CD14-positive monocyte (primary cell): ENCODE measurements at regions of chr6 and their contacts with region 1.

Region 1: GRCh38 chr6:125956506-125957390 is at the start of gene HINT3:
- DNase-seq: peak; percentile 98 to 99 (median 98)
- H3K4me3 ChIP-seq: peak within 1 kb of the TSS; percentile 86 to 96 (median 88)
- H3K4me3 Mint-ChIP-seq: peak within 1 kb of the TSS in 1 of 2 donors; percentile 12
- H3K27ac ChIP-seq: peak within 1 kb of the TSS; percentile 90 to 95
- H3K27ac Mint-ChIP-seq: peak within 1 kb of the TSS in 3 of 7 donors; percentile 44 to 81 (median 66)
- H3K4me1 ChIP-seq: peaks cover 26 to 27% of the 10 kb centered on the region in 2 donors
- H3K4me1 Mint-ChIP-seq: peaks cover 10% of the 10 kb centered on the region
- H3K27me3 ChIP-seq: no peaks in the 10 kb centered on the region
- H3K27me3 Mint-ChIP-seq: peaks cover 0 to 2% (median 0%) of the 10 kb centered on the region in 3 donors
- CTCF ChIP-seq: peak; percentile 98
- polyA plus RNA-seq, gene HINT3: 5.3 to 18.0 (median 12.3) TPM

Region 2: DNA sequence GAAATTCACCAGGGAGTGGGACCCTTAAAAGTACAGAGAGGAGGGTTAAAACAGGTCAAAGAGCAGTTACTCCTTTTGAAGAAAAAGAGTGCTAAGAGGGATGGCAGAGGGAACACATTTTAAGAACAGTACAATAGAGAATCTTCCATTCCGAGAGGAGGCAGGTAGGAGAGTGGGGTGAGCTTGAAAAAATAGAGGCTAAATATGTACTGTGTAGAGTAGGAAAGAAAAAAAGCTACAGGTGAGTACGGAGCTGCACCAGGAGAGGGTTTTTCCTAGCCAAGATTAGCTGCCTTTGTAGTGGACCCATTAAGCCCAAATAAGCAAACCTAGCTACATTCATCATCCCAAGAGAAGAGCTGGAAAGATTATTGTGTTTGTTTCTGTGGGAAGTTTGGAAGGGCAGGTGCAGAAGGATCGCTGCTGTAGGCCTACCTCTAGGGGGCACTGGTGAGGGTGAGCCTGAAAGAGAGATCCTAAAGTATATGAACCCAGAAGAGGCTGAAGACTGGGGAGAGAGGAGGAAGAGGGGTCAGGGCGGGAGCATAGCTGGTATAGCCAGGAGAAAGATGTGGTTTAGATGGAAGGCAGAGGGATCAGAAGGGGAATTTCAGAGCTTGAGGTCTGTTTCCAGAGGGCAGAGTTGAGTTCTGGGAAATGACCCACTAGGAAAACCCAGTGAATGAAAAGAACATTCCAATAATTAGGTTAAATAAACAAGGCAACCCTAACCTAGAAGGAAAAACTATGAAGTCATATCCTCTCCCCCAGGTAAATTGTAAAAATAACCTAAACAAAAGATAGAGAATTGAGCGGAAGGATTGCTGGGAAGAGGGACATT is 50.4 kb before region 1 on chr6:
- intact Hi-C with region 1: loop called in 1 of 2 experiments (anchors 10 kb)
- DNase-seq: peak; percentile 45 to 63 (median 49)
- H3K4me3 ChIP-seq: no peak overlapping the region
- H3K4me3 Mint-ChIP-seq: no peak overlapping the region
- H3K27ac ChIP-seq: no peak overlapping the region
- H3K27ac Mint-ChIP-seq: peak overlapping the region in 6 of 7 donors; percentile 3 to 73 (median 35)
- H3K4me1 ChIP-seq: peaks cover 19 to 26% of the 10 kb centered on the region in 2 donors
- H3K4me1 Mint-ChIP-seq: peaks cover 34% of the 10 kb centered on the region
- H3K27me3 ChIP-seq: no peaks in the 10 kb centered on the region
- H3K27me3 Mint-ChIP-seq: no peaks in the 10 kb centered on the region
- CTCF ChIP-seq: peak; percentile 90

Region 3: GRCh38 chr6:125918681-125919566 is 37.8 kb before region 1 on chr6:
- intact Hi-C with region 1: loop called in 1 of 2 experiments (anchors 5 kb)
- DNase-seq: peak; percentile 75 to 90 (median 75)
- H3K4me3 ChIP-seq: peak overlapping the region; percentile 33 to 67 (median 67)
- H3K4me3 Mint-ChIP-seq: peak overlapping the region; percentile 79 to 89
- H3K27ac ChIP-seq: peak overlapping the region; percentile 43 to 81
- H3K27ac Mint-ChIP-seq: peak overlapping the region; percentile 90 to 97 (median 95)
- H3K4me1 ChIP-seq: peaks cover 28 to 38% of the 10 kb centered on the region in 2 donors
- H3K4me1 Mint-ChIP-seq: peaks cover 44% of the 10 kb centered on the region
- H3K27me3 ChIP-seq: no peaks in the 10 kb centered on the region
- H3K27me3 Mint-ChIP-seq: no peaks in the 10 kb centered on the region
- CTCF ChIP-seq: no peak

Region 4: DNA sequence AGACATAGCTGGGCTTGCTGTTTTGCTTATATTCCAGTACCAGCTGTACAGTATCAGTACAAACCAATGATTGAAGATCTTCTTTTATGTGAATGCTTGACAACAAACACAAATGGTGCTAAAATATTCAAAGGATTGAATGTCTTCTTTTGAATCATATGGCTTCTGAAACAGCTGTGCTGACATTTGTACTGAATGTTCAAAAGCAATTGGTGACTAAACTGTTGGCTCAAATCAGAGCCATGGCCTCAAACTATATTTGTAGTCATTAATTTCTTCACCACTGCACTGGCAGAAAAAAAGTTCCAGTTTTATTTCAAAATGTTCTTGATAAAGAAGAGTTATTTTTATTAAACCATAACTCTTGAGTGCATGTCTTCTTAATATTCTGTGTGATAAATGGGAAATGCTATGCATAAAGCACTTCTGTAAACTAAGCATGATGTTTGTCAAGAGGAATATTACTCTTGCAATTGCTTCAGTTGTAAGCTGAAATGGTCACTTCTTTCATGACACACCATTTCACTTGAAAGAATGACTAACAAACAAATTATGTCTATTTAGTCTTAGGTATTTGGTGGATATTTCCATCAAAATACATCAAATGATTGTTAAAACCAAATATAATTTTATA is 337.3 kb after region 1 on chr6:
- intact Hi-C with region 1: no loop called
- DNase-seq: no peak
- H3K4me3 ChIP-seq: no peak overlapping the region
- H3K4me3 Mint-ChIP-seq: no peak overlapping the region
- H3K27ac ChIP-seq: no peak overlapping the region
- H3K27ac Mint-ChIP-seq: no peak overlapping the region
- H3K4me1 ChIP-seq: no peaks in the 10 kb centered on the region
- H3K4me1 Mint-ChIP-seq: no peaks in the 10 kb centered on the region
- H3K27me3 ChIP-seq: no peaks in the 10 kb centered on the region
- H3K27me3 Mint-ChIP-seq: no peaks in the 10 kb centered on the region
- CTCF ChIP-seq: no peak